Upper lobe of right lung (tissue), 1 donor: ENCODE measurements at regions of chr2 and their contacts with region 1.

Region 1: GRCh38 chr2:165401285-165401852 is 68.1 kb upstream of the CSRNP3 start:
- DNase-seq: no peak
- ATAC-seq: peak; percentile 70
- H3K4me3 ChIP-seq: no peak overlapping the region
- H3K27ac ChIP-seq: no peak overlapping the region
- H3K4me1 ChIP-seq: no peaks in the 10 kb centered on the region
- H3K27me3 ChIP-seq: no peaks in the 10 kb centered on the region
- CTCF ChIP-seq: peak; percentile 75

Region 2: DNA sequence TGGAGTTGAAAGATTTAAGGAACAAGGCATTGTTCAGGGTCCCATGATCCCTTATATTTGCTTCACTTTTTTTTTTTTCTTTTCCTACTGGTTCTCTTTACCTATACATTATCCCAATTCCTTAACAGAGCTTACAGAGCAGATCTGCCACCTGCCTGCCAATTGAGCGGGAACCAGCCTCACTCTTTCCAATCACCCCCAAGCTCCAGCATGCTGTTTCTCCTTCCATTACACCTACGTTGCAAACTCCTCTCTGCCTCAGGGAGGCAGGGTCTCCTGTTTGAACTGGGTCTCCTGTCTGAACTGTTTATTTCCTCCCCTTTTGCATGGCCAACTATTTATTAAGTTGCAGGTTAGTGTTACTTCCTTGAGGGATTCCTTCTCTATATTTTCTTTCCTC is 368.8 kb before region 1 on chr2:
- intact Hi-C with region 1: no loop called
- DNase-seq: no peak
- ATAC-seq: no peak
- H3K4me3 ChIP-seq: no peak overlapping the region
- H3K27ac ChIP-seq: no peak overlapping the region
- H3K4me1 ChIP-seq: no peaks in the 10 kb centered on the region
- H3K27me3 ChIP-seq: no peaks in the 10 kb centered on the region
- CTCF ChIP-seq: no peak

Region 3: GRCh38 chr2:165251366-165251765 is 150.0 kb before region 1 on chr2:
- intact Hi-C with region 1: no loop called
- DNase-seq: no peak
- ATAC-seq: no peak
- H3K4me3 ChIP-seq: no peak overlapping the region
- H3K27ac ChIP-seq: no peak overlapping the region
- H3K4me1 ChIP-seq: no peaks in the 10 kb centered on the region
- H3K27me3 ChIP-seq: no peaks in the 10 kb centered on the region
- CTCF ChIP-seq: no peak

Region 4: GRCh38 chr2:165462443-165462842 is 61.1 kb after region 1 on chr2:
- intact Hi-C with region 1: no loop called
- DNase-seq: no peak
- ATAC-seq: no peak
- H3K4me3 ChIP-seq: no peak overlapping the region
- H3K27ac ChIP-seq: no peak overlapping the region
- H3K4me1 ChIP-seq: no peaks in the 10 kb centered on the region
- H3K27me3 ChIP-seq: no peaks in the 10 kb centered on the region
- CTCF ChIP-seq: no peak

Region 5: GRCh38 chr2:165522719-165523118 is 121.3 kb after region 1 on chr2:
- intact Hi-C with region 1: no loop called
- DNase-seq: no peak
- ATAC-seq: no peak
- H3K4me3 ChIP-seq: no peak overlapping the region
- H3K27ac ChIP-seq: no peak overlapping the region
- H3K4me1 ChIP-seq: no peaks in the 10 kb centered on the region
- H3K27me3 ChIP-seq: no peaks in the 10 kb centered on the region
- CTCF ChIP-seq: no peak

Region 6: GRCh38 chr2:165698444-165698894 is 297.1 kb after region 1 on chr2:
- intact Hi-C with region 1: loop called (anchors 10 kb)
- DNase-seq: no peak
- ATAC-seq: peak; percentile 78
- H3K4me3 ChIP-seq: no peak overlapping the region
- H3K27ac ChIP-seq: no peak overlapping the region
- H3K4me1 ChIP-seq: no peaks in the 10 kb centered on the region
- H3K27me3 ChIP-seq: no peaks in the 10 kb centered on the region
- CTCF ChIP-seq: peak; percentile 50